Activated CD4-positive, alpha-beta T cell treated with anti-CD3 and anti-CD28 coated beads for 36 hours (primary cell): ENCODE measurements at regions of chr5 and their contacts with region 1.

Region 1: GRCh38 chr5:61331407-61332357 is at the start of gene ZSWIM6:
- DNase-seq: peak; percentile 99
- ATAC-seq: peak; percentile 90
- H3K4me3 Mint-ChIP-seq: peak within 1 kb of the TSS; percentile 79
- H3K27ac Mint-ChIP-seq: peak within 1 kb of the TSS; percentile 84
- H3K4me1 Mint-ChIP-seq: peaks cover 41% of the 10 kb centered on the region
- H3K27me3 Mint-ChIP-seq: peaks cover 25% of the 10 kb centered on the region
- total RNA-seq, gene ZSWIM6: 4.5 to 5.7 TPM

Region 2: GRCh38 chr5:60699530-60700382 is 631.9 kb before region 1 on chr5 and contains the start of gene DEPDC1B:
- CTCF ChIA-PET with region 1: no interaction called
- POLR2A ChIA-PET with region 1: interaction called, 6 read pairs
- intact Hi-C with region 1: loop called in 1 of 2 experiments (anchors 1 kb)
- DNase-seq: peak; percentile 94
- ATAC-seq: peak; percentile 97
- H3K4me3 Mint-ChIP-seq: peak within 1 kb of the TSS; percentile 84
- H3K27ac Mint-ChIP-seq: peak within 1 kb of the TSS; percentile 88
- H3K4me1 Mint-ChIP-seq: peaks cover 16% of the 10 kb centered on the region
- H3K27me3 Mint-ChIP-seq: peaks cover 2% of the 10 kb centered on the region
- total RNA-seq, gene DEPDC1B: 34.2 to 40.3 TPM

Region 3: GRCh38 chr5:61055434-61056006 is 276.2 kb before region 1 on chr5:
- CTCF ChIA-PET with region 1: interaction called, 4 read pairs
- POLR2A ChIA-PET with region 1: no interaction called
- intact Hi-C with region 1: loop called (anchors 10 kb)
- DNase-seq: no peak
- ATAC-seq: peak; percentile 49
- H3K4me3 Mint-ChIP-seq: no peak overlapping the region
- H3K27ac Mint-ChIP-seq: no peak overlapping the region
- H3K4me1 Mint-ChIP-seq: peaks cover 4% of the 10 kb centered on the region
- H3K27me3 Mint-ChIP-seq: no peaks in the 10 kb centered on the region

Region 4: GRCh38 chr5:61280205-61280604 is 51.5 kb before region 1 on chr5:
- CTCF ChIA-PET with region 1: interaction called, 3 read pairs
- POLR2A ChIA-PET with region 1: no interaction called
- intact Hi-C with region 1: loop called (anchors 2 kb)
- DNase-seq: peak; percentile 35
- ATAC-seq: peak; percentile 39
- H3K4me3 Mint-ChIP-seq: no peak overlapping the region
- H3K27ac Mint-ChIP-seq: no peak overlapping the region
- H3K4me1 Mint-ChIP-seq: peaks cover 41% of the 10 kb centered on the region
- H3K27me3 Mint-ChIP-seq: no peaks in the 10 kb centered on the region

Region 5: GRCh38 chr5:61551637-61552313 is 220.1 kb after region 1 on chr5:
- CTCF ChIA-PET with region 1: no interaction called
- POLR2A ChIA-PET with region 1: no interaction called
- intact Hi-C with region 1: no loop called
- DNase-seq: no peak
- ATAC-seq: no peak
- H3K4me3 Mint-ChIP-seq: no peak overlapping the region
- H3K27ac Mint-ChIP-seq: no peak overlapping the region
- H3K4me1 Mint-ChIP-seq: no peaks in the 10 kb centered on the region
- H3K27me3 Mint-ChIP-seq: no peaks in the 10 kb centered on the region

Region 6: GRCh38 chr5:61578858-61579503 is 247.3 kb after region 1 on chr5:
- CTCF ChIA-PET with region 1: no interaction called
- POLR2A ChIA-PET with region 1: no interaction called
- intact Hi-C with region 1: loop called in 1 of 2 experiments (anchors 1 kb)
- DNase-seq: no peak
- ATAC-seq: peak; percentile 87
- H3K4me3 Mint-ChIP-seq: no peak overlapping the region
- H3K27ac Mint-ChIP-seq: no peak overlapping the region
- H3K4me1 Mint-ChIP-seq: no peaks in the 10 kb centered on the region
- H3K27me3 Mint-ChIP-seq: peaks cover 4% of the 10 kb centered on the region

Region 7: DNA sequence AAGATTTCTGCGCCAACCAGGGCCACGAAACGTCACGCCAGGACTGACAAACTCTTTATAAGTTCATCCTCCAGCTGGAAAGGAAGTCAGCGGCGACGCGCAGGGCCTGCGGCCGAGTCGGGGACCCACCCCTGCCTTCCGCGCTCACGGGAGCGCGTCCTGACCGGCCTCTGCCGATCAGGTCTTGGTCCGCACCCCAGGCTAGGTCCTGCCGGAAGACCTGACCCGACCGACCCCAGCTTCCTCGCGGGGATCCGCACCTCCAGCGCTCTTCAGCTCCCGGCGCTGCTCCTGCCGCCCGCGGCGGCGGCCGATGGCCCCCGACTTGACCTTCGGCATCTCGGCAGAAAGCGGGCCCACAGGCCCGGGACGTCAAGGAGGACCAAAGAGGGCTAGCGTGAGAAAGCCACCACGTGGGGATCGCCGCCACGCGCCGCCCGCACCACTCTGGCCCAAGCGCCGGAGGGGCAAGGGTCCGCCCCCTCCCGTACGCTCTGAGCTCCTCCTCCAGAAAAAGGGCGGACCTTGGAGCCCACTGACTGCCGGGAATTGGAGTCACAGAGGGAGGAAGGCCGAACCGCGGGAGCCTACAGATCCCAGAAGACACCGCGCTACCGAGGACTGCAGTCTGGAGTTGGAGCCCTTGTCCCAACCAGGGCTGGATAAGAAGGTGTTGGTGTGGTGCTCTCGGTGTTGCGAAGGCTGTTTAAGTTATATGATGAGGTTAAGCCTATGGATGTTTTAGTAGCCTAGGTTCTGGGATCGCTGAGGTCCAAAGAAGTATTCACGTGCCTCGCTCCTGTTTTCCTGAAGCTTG is 1072.0 kb after region 1 on chr5 and contains the start of gene DIMT1:
- CTCF ChIA-PET with region 1: no interaction called
- POLR2A ChIA-PET with region 1: no interaction called
- intact Hi-C with region 1: loop called in 1 of 2 experiments (anchors 10 kb)
- DNase-seq: peak; percentile 97
- ATAC-seq: peak; percentile 99
- H3K4me3 Mint-ChIP-seq: peak within 1 kb of the TSS; percentile 95
- H3K27ac Mint-ChIP-seq: peak within 1 kb of the TSS; percentile 97
- H3K4me1 Mint-ChIP-seq: peaks cover 29% of the 10 kb centered on the region
- H3K27me3 Mint-ChIP-seq: no peaks in the 10 kb centered on the region
- total RNA-seq, gene DIMT1: 38.9 to 52.2 TPM